ENCODE measurements at regions of chr1 and their contacts with region 1.

Region 1: DNA sequence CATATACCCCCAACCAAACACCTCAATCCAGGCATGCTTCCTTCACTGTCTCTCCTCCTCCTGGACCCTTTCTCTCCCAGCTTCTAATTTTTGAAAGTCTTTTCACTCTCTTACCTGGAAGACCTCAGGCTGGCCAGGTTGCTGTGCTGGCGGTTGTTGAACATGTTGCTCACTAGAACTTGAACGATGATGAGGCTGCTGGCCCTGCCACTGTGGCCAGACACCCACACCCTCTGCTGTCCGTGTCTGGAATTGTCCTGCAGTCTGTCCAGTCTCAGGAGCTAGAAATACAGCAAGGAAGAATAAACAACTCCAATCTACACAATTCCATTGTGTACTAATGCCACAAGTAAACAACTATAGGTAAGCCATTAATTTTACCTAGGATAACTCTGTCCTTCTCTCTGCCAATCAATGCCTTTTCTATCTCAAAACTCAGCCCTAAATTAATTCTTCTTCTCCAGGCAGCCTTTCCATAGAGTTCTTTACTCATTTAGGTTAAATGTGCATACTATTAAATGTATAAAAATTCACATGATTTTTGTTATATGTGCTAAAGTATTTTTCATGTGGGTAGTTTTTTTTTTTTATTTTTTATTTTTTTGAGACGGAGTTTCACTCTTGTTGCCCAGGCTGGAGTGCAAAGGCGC is 5.1 kb upstream of the CTSK start:
- DNase-seq: peak; percentile 56 to 68 (median 68)
- H3K4me3 ChIP-seq: no peak overlapping the region
- H3K4me3 Mint-ChIP-seq: no peak overlapping the region
- H3K27ac ChIP-seq: no peak overlapping the region
- H3K27ac Mint-ChIP-seq: no peak overlapping the region
- H3K4me1 ChIP-seq: peaks cover 14 to 19% of the 10 kb centered on the region in 2 donors
- H3K4me1 Mint-ChIP-seq: peaks cover 9% of the 10 kb centered on the region
- H3K27me3 ChIP-seq: no peaks in the 10 kb centered on the region
- H3K27me3 Mint-ChIP-seq: peaks cover 0 to 2% (median 0%) of the 10 kb centered on the region in 3 donors
- CTCF ChIP-seq: peak; percentile 84

Region 2: DNA sequence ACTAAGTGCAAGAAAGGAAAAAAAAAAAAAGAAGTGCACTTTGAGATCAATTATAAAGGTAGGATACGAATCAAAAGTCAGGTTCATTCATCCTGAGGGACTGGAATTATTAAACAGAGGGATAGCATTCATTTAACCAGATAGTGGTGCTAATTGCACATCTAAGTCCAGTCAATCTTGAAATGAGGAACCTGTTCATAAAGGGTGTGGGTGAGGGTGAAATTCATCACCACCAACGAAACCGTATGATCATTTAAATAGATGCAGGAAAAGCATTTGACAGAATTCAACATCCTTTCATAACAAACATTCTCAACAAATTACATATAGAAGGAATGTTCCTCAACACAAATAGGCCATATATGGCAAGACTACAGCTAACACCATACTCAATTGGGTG is 53.2 kb before region 1 on chr1:
- intact Hi-C with region 1: loop called (anchors 1 to 2 kb)
- DNase-seq: peak in 2 of 3 donors; percentile 60 to 65
- H3K4me3 ChIP-seq: peak overlapping the region; percentile 96 to 100 (median 99)
- H3K4me3 Mint-ChIP-seq: peak overlapping the region; percentile 77 to 100
- H3K27ac ChIP-seq: peak overlapping the region in 1 of 2 donors; percentile 53
- H3K27ac Mint-ChIP-seq: peak overlapping the region; percentile 83 to 94 (median 92)
- H3K4me1 ChIP-seq: peaks cover 24 to 45% of the 10 kb centered on the region in 2 donors
- H3K4me1 Mint-ChIP-seq: peaks cover 46% of the 10 kb centered on the region
- H3K27me3 ChIP-seq: no peaks in the 10 kb centered on the region
- H3K27me3 Mint-ChIP-seq: peaks cover 0 to 5% (median 0%) of the 10 kb centered on the region in 3 donors
- CTCF ChIP-seq: peak; percentile 36

Region 3: GRCh38 chr1:150876119-150876454 is 62.9 kb after region 1 on chr1:
- intact Hi-C with region 1: no loop called
- DNase-seq: peak in 1 of 3 donors; percentile 24
- H3K4me3 ChIP-seq: peak overlapping the region; percentile 95 to 98 (median 98)
- H3K4me3 Mint-ChIP-seq: peak overlapping the region; percentile 86 to 93
- H3K27ac ChIP-seq: peak overlapping the region; percentile 81 to 91
- H3K27ac Mint-ChIP-seq: peak overlapping the region; percentile 90 to 97 (median 94)
- H3K4me1 ChIP-seq: peaks cover 35 to 42% of the 10 kb centered on the region in 2 donors
- H3K4me1 Mint-ChIP-seq: peaks cover 42% of the 10 kb centered on the region
- H3K27me3 ChIP-seq: no peaks in the 10 kb centered on the region
- H3K27me3 Mint-ChIP-seq: peaks cover 0 to 1% (median under 1%) of the 10 kb centered on the region in 3 donors
- CTCF ChIP-seq: no peak